Head of caudate nucleus (tissue), 42 donors: ENCODE measurements at regions of chr1 and their contacts with region 1.

Region 1: DNA sequence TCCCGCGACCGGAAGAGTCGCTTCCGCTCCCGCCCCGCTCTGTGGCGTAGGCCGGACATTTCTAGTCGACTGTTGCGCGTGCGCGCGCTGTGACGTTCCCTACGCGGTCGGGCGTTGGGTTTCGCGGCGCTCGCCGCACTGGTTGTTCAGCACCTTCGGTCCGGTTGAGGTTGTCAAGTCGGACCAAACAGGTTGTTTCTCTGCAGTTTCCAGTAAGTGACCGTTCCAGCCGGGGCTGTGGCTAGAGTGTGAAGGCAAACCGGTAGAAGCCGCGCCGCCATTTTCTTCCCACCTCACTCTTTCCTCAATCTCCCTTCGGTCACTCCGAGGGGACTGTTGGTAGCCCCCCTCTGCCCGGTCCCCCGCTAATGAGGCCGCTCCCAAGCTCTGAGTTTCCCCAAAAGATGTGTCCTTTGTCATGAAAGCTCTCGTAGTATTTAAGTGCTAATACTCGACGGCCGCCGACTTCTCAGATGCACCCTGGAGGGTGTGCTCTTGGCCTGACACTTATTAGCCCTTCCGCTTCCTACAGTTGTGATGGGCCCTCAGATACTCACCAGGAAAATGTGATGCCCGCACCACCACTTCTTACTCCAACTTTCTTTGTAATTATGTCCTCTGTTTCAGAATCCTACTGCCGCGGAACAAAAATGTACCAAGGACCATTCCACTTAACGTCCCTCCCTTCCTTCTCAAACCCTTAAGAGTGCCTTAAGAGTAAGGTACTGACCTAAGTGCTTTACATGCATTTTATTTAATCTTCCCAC is 56.3 kb downstream of the TRAF5 start:
- DNase-seq: peak; percentile 85 to 98 (median 94)

Region 2: DNA sequence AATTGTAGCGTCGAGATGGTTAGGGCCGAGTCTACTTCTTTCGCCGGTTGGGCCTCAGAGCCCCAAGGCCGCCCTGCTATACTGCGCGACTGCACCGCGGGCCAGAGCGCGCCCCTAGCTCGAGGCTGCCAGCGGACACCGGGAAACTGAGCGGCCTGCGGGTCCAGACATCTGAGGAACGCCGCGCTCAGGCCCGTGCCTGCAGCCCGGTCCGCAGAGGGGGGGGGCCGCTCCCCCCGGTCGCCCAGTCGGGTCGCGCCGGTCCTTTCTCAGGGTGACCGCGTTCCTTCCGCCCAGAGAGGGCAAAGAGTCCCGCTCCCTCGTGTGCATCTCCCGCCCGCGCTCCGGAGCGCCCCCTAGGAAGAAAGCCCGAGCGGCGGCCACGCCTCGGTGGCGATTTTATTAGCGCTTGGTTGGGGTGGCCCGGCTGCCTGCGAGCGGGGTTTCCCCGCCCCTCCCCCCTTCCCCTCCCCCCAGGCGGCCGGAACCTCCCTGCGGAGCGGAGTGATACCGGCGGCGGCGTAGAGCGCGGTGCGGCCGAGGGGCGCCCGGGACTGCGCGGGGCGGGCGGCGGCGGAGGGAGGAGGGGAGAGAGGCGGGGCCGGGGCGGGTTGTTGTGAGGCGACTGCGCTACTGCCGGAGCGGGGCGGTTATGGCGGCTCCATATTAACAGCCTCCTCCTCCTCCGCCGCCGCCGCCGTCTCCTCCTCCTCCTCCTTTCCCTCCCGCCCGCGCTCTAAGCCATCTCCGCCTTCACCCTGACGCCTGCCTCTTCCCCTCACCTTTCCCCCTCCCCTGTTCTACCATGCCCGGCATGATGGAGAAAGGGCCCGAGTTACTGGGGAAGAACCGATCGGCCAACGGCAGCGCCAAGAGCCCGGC is 123.9 kb before region 1 on chr1 and contains the start of gene RCOR3:
- intact Hi-C with region 1: loop called (anchors 2 kb)
- DNase-seq: peak; percentile 80 to 97 (median 93)